OCI-LY7 (cell line): ENCODE measurements at regions of chr2 and their contacts with region 1.

Region 1: DNA sequence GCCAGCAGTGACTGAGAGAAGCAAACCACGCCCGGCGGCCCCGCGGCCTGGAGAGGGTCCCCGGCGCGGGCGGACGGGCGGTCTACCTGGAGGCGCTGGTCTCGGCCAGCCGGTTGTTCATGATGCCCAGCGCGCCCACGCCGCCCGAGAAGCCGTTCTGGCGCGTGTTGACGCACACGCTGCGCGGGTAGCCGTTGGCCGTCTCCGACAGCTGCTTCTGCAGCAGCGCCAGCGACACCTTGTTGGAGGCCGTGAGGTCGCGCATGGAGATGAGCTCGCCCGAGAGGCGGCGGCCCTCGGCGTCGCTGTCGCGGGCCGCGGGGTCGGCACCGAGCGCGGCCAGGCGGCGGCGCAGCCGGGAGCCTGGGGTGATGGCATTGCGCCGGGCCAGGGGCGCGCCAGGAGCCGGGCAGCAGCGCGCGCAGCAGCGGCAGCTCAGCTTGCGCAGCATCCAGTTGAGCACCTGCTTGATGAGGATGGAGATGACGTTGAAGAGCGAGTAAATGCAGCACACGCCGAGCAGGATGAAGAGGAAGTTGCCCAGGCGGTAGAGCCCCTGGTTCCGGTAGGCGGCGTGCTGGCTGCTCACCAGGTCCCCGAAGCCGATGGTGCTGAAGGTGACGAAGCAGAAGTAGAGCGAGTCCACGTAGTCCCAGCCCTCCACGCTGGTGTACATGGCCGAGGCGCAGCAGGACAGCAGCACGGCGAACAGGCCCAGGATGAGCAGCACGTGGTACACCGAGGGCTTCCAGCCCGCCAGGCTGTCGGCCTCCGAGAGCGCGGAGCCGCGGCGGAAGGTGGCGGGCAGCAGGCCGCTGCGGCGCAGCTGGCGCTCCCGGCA is 118.1 kb downstream of the MSH2 start:
- DNase-seq: peak; percentile 97
- H3K4me3 ChIP-seq: peak overlapping the region; percentile 77
- H3K27ac ChIP-seq: peak overlapping the region; percentile 96
- H3K4me1 ChIP-seq: peaks cover 60% of the 10 kb centered on the region
- CTCF ChIP-seq: peak; percentile 66

Region 2: DNA sequence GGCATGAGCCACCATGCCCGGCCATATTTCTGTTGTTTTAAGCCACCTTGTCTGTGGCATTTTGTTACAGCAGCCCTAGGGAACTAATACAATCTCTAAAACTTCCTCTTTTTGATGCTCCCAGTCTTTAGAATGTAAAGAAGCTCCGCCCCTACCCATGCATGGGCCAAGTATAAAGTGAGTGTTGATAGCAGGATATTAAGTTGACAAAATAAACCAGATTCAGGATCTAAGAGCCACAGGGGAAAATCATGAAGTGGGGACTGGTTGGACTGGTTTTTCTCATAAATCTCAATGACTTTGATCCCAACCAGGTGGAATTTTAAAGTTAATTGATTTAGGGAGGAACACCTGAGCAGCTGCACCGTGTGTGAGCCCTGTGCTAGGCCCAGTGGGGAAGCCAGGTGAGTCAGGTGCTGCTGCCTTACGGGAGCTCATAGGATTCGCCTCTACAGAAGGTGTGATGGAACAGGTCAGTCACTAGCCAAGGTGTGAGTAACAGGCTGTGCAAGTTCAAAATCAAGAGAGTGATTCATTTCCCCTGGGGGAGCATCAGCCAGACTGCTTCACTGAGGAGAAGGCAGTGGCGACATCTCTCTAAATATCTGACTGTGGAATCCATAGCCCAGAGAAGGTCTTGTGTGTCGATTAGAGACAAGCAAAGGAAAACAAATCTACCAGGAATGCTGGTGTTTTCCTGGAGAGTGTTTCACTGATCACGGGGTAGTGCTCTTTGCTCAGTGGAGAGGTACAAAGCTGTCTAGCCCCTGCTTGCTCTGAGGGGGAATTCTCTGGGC is 181.1 kb before region 1 on chr2:
- CTCF ChIA-PET with region 1: no interaction called
- POLR2A ChIA-PET with region 1: no interaction called
- intact Hi-C with region 1: loop called (anchors 5 kb)
- DNase-seq: no peak
- H3K4me3 ChIP-seq: no peak overlapping the region
- H3K27ac ChIP-seq: no peak overlapping the region
- H3K4me1 ChIP-seq: peaks cover 18% of the 10 kb centered on the region
- CTCF ChIP-seq: no peak

Region 3: GRCh38 chr2:47437287-47437686 is 83.8 kb before region 1 on chr2:
- CTCF ChIA-PET with region 1: interaction called, 7 read pairs
- POLR2A ChIA-PET with region 1: interaction called, 4 read pairs
- intact Hi-C with region 1: loop called (anchors 5 kb)
- DNase-seq: peak; percentile 50
- H3K4me3 ChIP-seq: no peak overlapping the region
- H3K27ac ChIP-seq: no peak overlapping the region
- H3K4me1 ChIP-seq: peaks cover 4% of the 10 kb centered on the region
- CTCF ChIP-seq: peak; percentile 75

Region 4: DNA sequence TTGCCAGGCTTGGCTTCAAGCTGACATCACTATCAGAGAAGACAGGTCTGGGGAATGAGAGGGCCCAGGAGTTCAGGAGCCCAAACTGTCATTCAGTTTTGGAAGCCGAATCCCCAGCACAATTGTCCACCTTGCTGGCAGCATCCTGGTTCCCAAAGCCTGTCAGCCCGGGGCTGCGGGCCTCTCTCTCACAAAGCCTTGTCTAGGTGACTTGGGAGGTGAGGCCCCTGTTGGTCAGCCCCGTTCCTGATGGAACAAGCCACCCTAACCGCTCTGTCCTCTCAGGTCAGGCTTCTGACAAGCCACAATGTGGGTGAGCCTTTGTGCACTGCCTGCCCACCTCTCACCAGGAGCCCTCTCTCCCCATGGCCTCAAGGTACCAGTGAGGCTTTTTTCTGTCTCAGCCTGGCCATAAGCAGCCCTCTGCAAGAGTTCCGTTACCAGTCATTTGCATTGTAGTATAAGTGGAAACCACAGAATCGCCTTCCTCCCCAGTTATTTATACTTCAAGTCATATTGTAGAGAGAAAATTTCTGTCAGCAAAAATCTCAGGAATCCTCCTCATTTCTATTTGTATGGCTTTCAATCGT is 17.5 kb before region 1 on chr2:
- CTCF ChIA-PET with region 1: no interaction called
- POLR2A ChIA-PET with region 1: interaction called, 9 read pairs
- intact Hi-C with region 1: loop called (anchors 1 kb)
- DNase-seq: peak; percentile 81
- H3K4me3 ChIP-seq: peak overlapping the region; percentile 43
- H3K27ac ChIP-seq: peak overlapping the region; percentile 92
- H3K4me1 ChIP-seq: peaks cover 37% of the 10 kb centered on the region
- CTCF ChIP-seq: no peak

Region 5: DNA sequence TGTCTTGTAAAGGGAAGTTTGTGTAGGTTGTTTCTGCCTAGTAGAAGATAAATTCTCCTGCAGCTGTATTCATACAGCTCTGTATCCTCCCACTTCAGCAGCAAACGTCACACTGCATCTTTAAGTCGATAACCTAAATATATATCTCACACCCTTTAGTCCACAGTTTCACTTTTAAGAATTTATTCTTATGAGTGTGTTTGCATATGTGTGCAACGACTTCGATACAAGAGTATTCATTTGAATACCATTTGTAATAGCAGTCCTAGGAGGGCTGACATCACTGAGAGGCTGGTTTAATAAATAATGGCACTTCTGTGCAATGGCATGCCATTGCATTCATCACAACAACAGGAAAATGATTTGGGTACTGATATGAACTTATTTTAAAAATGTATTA is 198.1 kb after region 1 on chr2:
- CTCF ChIA-PET with region 1: no interaction called
- POLR2A ChIA-PET with region 1: interaction called, 10 read pairs
- intact Hi-C with region 1: loop called (anchors 1 kb)
- DNase-seq: peak; percentile 83
- H3K4me3 ChIP-seq: peak overlapping the region; percentile 33
- H3K27ac ChIP-seq: peak overlapping the region; percentile 100
- H3K4me1 ChIP-seq: peaks cover 100% of the 10 kb centered on the region
- CTCF ChIP-seq: no peak

Region 6: DNA sequence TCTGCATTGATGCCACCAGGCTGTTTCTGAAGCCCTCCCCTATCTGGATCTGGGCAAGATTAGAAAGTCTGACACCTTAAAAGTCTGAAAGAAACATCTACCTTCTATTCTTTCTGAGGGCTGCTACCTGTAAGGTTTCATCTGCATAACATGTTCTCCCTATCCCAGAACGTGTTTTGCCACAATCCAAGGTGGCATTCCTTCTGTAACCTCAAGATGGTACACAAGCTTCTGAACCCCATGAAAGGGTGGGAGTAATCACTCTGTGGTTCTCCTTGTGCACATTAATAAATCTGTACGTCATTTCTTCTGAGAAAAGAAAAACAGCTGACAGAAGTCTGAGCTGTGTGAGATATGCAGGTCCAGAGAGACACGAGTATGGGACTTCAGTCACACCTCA is 220.0 kb after region 1 on chr2:
- CTCF ChIA-PET with region 1: no interaction called
- POLR2A ChIA-PET with region 1: interaction called, 3 read pairs
- intact Hi-C with region 1: loop called (anchors 1 kb)
- DNase-seq: no peak
- H3K4me3 ChIP-seq: no peak overlapping the region
- H3K27ac ChIP-seq: peak overlapping the region; percentile 32
- H3K4me1 ChIP-seq: peaks cover 68% of the 10 kb centered on the region
- CTCF ChIP-seq: no peak

Region 7: DNA sequence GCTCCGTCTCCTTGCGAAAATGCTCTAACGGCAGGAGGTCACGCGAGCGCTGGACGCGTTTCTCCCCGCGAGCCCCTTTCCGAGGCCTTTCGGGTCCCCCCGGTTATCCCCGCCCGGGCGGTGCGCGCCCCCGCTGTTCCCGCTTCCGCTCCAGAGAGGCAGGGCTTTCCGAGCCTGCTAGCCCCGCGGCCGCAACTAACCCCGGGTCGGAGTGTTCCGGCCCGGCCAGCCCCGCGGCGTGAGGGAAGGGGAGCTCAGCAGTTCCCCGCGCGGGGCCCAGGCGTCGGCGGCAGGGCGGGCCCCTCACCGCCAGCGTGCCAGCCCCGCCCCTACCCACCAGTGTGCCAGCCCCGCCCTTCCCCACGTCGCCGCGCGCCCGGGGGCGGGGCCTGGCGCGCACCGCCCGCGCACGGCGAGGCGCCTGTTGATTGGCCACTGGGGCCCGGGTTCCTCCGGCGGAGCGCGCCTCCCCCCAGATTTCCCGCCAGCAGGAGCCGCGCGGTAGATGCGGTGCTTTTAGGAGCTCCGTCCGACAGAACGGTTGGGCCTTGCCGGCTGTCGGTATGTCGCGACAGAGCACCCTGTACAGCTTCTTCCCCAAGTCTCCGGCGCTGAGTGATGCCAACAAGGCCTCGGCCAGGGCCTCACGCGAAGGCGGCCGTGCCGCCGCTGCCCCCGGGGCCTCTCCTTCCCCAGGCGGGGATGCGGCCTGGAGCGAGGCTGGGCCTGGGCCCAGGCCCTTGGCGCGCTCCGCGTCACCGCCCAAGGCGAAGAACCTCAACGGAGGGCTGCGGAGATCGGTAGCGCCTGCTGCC is 261.8 kb after region 1 on chr2 and contains the start of gene MSH6:
- CTCF ChIA-PET with region 1: no interaction called
- POLR2A ChIA-PET with region 1: interaction called, 10 read pairs
- intact Hi-C with region 1: loop called (anchors 1 kb)
- DNase-seq: peak; percentile 93
- H3K4me3 ChIP-seq: peak within 1 kb of the TSS; percentile 100
- H3K27ac ChIP-seq: peak within 1 kb of the TSS; percentile 93
- H3K4me1 ChIP-seq: peaks cover 54% of the 10 kb centered on the region
- CTCF ChIP-seq: no peak; the same call in 1 of the 2 replicates
- total RNA-seq, gene MSH6: 291 and 303 TPM in 2 replicates